ENCODE measurements at regions of chr20 and their contacts with region 1.

Region 1: DNA sequence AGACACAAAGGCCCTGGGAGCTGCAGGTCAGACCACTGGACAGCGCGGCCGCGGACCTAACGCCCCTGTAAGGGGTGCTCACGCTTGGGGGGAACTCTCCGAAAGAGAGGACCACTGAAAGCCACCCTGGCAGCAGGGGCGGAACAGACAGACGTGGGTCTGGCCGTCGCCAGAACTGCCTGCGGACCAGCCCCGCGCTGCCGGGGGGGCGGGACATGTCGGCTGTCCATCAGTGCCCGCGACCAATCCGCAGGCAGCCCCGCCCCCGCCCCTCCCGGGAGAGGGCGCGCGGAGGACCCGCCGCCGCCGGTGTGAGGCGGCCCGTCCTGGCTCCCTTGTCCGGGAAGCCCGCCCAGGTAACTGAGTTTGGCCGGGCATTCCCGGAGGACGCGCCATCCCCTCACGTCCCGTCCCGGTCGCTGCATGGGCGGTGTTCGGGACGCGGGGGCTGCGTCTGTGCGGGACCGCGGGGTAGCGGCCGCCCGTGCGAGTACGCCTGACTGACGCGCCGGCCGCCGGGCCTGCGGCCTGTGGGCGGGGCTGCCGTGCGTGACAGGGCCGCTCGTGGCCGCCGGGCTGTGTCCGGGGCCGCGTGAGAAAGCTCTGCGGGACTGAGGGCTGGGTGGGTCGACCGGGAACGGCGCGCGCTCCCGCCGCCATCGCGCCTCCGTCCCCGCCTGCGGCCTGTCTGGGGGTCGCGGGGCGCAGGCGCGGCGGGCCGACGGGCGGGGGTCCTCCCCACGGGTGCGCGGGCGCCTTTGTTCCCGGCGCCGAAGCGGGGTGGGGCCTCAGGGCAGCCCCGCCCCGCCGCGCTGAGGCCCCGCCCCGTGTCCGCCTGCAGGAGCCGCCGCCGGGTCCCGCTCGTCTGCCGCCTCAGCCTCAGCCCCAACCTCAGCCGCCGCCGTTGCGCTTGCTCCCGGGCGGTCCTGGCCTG is at the start of gene PLCG1:
- DNase-seq: peak; percentile 96
- H3K4me3 Mint-ChIP-seq: peak within 1 kb of the TSS; percentile 96
- H3K27ac Mint-ChIP-seq: peak within 1 kb of the TSS; percentile 95
- H3K4me1 Mint-ChIP-seq: peaks cover 57% of the 10 kb centered on the region
- H3K27me3 Mint-ChIP-seq: no peaks in the 10 kb centered on the region
- total RNA-seq, gene PLCG1: 246 and 255 TPM in 2 replicates

Region 2: GRCh38 chr20:41086402-41087338 is 50.3 kb before region 1 on chr20:
- intact Hi-C with region 1: no loop called
- DNase-seq: no peak
- H3K4me3 Mint-ChIP-seq: peak overlapping the region; percentile 6
- H3K27ac Mint-ChIP-seq: no peak overlapping the region
- H3K4me1 Mint-ChIP-seq: peaks cover 16% of the 10 kb centered on the region
- H3K27me3 Mint-ChIP-seq: no peaks in the 10 kb centered on the region

Region 3: DNA sequence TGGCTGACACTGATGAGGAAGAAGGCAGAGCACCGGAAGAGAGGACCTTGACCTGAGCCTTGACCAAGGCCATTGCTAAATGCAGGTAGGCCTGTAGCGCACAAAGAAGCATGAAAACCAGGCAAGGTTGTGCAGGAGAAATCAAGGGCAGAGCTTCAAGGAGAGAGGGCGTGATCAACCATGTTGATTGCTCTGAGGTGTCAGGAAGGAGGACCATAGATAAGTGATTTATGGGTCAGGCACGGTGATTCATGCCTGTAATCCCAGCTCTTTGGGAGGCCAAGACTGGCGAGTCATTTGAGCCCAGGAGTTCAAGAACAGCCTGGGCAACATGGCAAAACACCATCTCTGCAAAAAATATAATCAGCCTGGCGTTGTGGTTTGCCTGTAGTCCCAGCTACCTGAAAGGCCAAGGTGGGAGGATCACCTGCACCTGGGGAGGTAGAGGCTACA is 12.8 kb after region 1 on chr20:
- intact Hi-C with region 1: loop called (anchors 1 kb)
- DNase-seq: no peak
- H3K4me3 Mint-ChIP-seq: peak overlapping the region; percentile 40
- H3K27ac Mint-ChIP-seq: peak overlapping the region; percentile 84
- H3K4me1 Mint-ChIP-seq: peaks cover 87% of the 10 kb centered on the region
- H3K27me3 Mint-ChIP-seq: no peaks in the 10 kb centered on the region

Region 4: DNA sequence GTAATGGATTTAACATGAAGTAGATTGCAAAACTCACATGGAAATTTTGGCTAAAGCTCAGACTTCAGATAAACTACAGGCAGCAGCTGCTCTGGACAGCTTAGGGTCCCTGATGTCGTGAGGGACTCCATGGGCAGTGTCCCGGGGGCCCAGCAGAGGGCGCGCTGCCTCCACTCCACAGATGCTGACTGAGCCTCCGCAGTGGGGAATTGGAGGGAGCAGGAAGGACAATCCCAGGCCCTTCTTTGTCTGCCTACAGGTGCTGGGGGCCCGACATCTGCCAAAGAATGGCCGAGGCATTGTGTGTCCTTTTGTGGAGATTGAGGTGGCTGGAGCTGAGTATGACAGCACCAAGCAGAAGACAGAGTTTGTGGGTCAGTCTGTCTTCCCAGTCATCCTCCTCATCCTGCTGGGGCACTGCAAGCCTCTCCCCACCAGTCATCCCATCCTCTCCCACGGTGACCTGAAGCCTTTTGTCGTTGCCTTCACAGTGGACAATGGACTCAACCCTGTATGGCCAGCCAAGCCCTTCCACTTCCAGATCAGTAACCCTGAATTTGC is 36.3 kb after region 1 on chr20:
- intact Hi-C with region 1: loop called (anchors 5 kb)
- DNase-seq: peak; percentile 89
- H3K4me3 Mint-ChIP-seq: no peak overlapping the region
- H3K27ac Mint-ChIP-seq: peak overlapping the region; percentile 46
- H3K4me1 Mint-ChIP-seq: peaks cover 18% of the 10 kb centered on the region
- H3K27me3 Mint-ChIP-seq: no peaks in the 10 kb centered on the region

Region 5: GRCh38 chr20:41317536-41318270 is 180.8 kb after region 1 on chr20 and contains the start of gene ZHX3:
- intact Hi-C with region 1: loop called (anchors 1 kb)
- DNase-seq: peak; percentile 99
- H3K4me3 Mint-ChIP-seq: peak within 1 kb of the TSS; percentile 88
- H3K27ac Mint-ChIP-seq: peak within 1 kb of the TSS; percentile 87
- H3K4me1 Mint-ChIP-seq: peaks cover 20% of the 10 kb centered on the region
- H3K27me3 Mint-ChIP-seq: peaks cover 8% of the 10 kb centered on the region
- total RNA-seq, gene ZHX3: 11.2 and 11.7 TPM in 2 replicates

Region 6: GRCh38 chr20:41617931-41618806 is 481.2 kb after region 1 on chr20 and contains the start of gene CHD6:
- intact Hi-C with region 1: loop called (anchors 5 kb)
- DNase-seq: peak; percentile 100
- H3K4me3 Mint-ChIP-seq: peak within 1 kb of the TSS; percentile 89
- H3K27ac Mint-ChIP-seq: peak within 1 kb of the TSS; percentile 86
- H3K4me1 Mint-ChIP-seq: peaks cover 31% of the 10 kb centered on the region
- H3K27me3 Mint-ChIP-seq: peaks cover 26% of the 10 kb centered on the region
- total RNA-seq, gene CHD6: 31.8 and 34.6 TPM in 2 replicates